SK-N-SH (cell line): ENCODE measurements at regions of chr17 and their contacts with region 1.

Region 1: GRCh38 chr17:7515911-7516610 is 31.9 kb downstream of the POLR2A start:
- DNase-seq: no peak
- H3K4me3 ChIP-seq: no peak overlapping the region
- H3K27ac ChIP-seq: no peak overlapping the region
- H3K4me1 ChIP-seq: no peaks in the 10 kb centered on the region
- H3K27me3 ChIP-seq: no peaks in the 10 kb centered on the region
- CTCF ChIP-seq: no peak
- EP300 ChIP-seq: no peak
- RAD21 ChIP-seq: no peak

Region 2: DNA sequence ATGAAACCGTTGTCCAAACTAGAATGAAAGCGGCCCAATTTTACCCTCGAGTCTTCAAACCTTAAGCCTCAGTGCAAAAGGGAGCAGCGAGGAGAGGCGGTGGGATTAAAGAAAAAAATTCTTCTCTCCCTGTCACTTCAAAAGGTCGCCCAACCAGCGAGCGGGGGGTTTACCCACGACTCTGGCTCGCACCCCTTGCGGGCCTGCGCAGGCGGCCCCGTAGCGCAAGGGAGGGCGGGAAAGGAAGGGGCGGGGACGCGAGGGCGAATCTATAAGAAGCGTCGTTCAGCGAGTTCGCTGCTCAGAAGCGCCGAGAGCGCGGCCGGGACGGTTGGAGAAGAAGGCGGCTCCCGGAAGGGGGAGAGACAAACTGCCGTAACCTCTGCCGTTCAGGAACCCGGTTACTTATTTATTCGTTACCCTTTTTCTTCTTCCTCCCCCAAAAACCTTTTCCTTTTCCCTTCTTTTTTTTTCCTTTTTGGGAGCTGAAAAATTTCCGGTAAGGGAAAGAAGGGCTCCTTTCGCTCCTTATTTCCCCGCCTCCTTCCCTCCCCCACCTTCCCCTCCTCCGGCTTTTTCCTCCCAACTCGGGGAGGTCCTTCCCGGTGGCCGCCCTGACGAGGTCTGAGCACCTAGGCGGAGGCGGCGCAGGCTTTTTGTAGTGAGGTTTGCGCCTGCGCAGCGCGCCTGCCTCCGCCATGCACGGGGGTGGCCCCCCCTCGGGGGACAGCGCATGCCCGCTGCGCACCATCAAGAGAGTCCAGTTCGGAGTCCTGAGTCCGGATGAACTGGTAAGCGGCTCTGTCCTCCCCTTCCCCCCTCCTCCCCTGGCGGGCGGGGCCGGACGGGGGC is 31.8 kb before region 1 on chr17 and contains the start of gene POLR2A:
- CTCF ChIA-PET with region 1: interaction called, 15 read pairs
- POLR2A ChIA-PET with region 1: no interaction called
- DNase-seq: peak; percentile 98
- H3K4me3 ChIP-seq: peak within 1 kb of the TSS; percentile 85 to 100
- H3K27ac ChIP-seq: peak within 1 kb of the TSS; percentile 99
- H3K4me1 ChIP-seq: peaks cover 31 to 34% of the 10 kb centered on the region in 2 experiments
- H3K27me3 ChIP-seq: no peaks in the 10 kb centered on the region
- CTCF ChIP-seq: no peak
- EP300 ChIP-seq: peak in 1 of 2 experiments; percentile 2; a peak in 2 of 4 replicates
- RAD21 ChIP-seq: 0 out of 2 replicates have a peak, but pooled peaks have one; percentile 13
- polyA plus RNA-seq, gene POLR2A: 19.0 and 37.3 TPM in 2 replicates

Region 3: DNA sequence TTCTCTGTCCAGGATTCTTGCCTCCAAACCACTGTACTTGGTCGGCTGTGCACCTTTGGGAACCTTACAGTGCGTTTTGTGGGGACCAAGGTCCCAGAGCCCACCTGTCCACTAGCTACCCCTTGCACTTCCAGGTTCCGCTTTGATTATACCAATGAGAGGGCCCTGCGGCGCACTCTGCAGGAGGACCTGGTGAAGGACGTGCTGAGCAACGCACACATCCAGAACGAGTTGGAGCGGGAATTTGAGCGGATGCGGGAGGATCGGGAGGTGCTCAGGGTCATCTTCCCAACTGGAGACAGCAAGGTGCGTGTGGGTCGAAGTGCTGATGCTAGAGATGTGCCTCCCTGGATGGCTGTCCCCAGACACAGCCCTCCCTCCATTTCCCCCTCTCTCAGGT is 13.1 kb before region 1 on chr17:
- CTCF ChIA-PET with region 1: interaction called, 15 read pairs
- POLR2A ChIA-PET with region 1: no interaction called
- DNase-seq: no peak
- H3K4me3 ChIP-seq: no peak overlapping the region
- H3K27ac ChIP-seq: no peak overlapping the region
- H3K4me1 ChIP-seq: no peaks in the 10 kb centered on the region
- H3K27me3 ChIP-seq: no peaks in the 10 kb centered on the region
- CTCF ChIP-seq: peak; percentile 39
- EP300 ChIP-seq: no peak
- RAD21 ChIP-seq: peak; percentile 47

Region 4: GRCh38 chr17:7548585-7549400 is 32.7 kb after region 1 on chr17 and contains the start of gene TNFSF12:
- CTCF ChIA-PET with region 1: interaction called, 236 read pairs
- POLR2A ChIA-PET with region 1: interaction called, 4 read pairs
- DNase-seq: peak; percentile 92
- H3K4me3 ChIP-seq: peak within 1 kb of the TSS; percentile 57 to 76
- H3K27ac ChIP-seq: peak within 1 kb of the TSS; percentile 26 to 45; a peak in 2 of 4 replicates
- H3K4me1 ChIP-seq: peaks cover 0 to 8% of the 10 kb centered on the region in 2 experiments; a peak in 1 of 4 replicates
- H3K27me3 ChIP-seq: no peaks in the 10 kb centered on the region; the same call in 1 of the 2 replicates
- CTCF ChIP-seq: peak; percentile 28; the same call in 1 of the 2 replicates
- EP300 ChIP-seq: no peak
- RAD21 ChIP-seq: no peak
- polyA plus RNA-seq, gene TNFSF12: 31.1 and 47.6 TPM in 2 replicates

Region 5: DNA sequence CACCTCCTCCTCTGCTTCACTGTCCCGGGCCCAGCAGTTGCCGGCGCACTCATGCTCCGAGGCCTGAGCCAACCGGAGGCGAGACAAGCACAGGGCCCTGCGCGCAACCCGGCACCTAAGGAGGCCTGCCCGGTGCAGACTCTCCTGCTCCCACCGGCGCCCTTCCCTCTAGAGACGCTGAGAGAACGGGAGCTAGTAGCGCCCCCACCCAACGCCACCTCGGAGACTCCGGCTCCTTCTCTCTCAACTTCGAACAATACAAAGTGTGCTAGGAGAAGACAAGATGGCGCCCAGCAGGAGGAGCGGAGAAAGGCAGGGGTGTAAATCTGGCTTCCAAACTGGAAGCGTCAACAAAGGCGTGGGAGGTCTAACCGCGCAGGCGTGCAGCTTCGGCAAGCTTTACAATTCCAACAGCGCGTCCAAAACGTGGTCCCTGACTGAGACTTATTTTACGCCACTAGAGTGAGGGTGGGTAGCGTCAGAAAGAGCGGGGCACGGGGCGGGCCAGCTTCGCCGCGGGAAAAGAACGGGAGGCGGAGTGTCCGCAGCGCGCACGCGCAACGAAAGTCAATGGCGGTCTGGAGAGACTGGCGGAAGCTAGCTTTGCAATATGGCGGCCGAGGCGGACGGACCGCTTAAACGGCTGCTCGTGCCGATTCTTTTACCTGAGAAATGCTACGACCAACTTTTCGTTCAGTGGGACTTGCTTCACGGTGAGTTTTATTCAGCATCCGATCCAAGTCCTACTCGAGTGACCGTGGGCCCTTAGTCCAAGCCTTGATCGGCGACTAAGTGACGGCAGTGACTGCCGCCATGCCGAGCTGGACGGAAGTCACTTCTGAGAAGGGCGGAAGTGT is 67.4 kb after region 1 on chr17 and contains the start of gene MPDU1:
- CTCF ChIA-PET with region 1: interaction called, 12 read pairs
- POLR2A ChIA-PET with region 1: interaction called, 3 read pairs
- DNase-seq: peak; percentile 93
- H3K4me3 ChIP-seq: peak within 1 kb of the TSS; percentile 65 to 73
- H3K27ac ChIP-seq: peak within 1 kb of the TSS; percentile 97 to 98
- H3K4me1 ChIP-seq: peaks cover 22 to 32% of the 10 kb centered on the region in 2 experiments; a peak in 3 of 4 replicates
- H3K27me3 ChIP-seq: no peaks in the 10 kb centered on the region
- CTCF ChIP-seq: no peak
- EP300 ChIP-seq: no peak
- RAD21 ChIP-seq: no peak
- polyA plus RNA-seq, gene MPDU1: 126 and 142 TPM in 2 replicates

Region 6: DNA sequence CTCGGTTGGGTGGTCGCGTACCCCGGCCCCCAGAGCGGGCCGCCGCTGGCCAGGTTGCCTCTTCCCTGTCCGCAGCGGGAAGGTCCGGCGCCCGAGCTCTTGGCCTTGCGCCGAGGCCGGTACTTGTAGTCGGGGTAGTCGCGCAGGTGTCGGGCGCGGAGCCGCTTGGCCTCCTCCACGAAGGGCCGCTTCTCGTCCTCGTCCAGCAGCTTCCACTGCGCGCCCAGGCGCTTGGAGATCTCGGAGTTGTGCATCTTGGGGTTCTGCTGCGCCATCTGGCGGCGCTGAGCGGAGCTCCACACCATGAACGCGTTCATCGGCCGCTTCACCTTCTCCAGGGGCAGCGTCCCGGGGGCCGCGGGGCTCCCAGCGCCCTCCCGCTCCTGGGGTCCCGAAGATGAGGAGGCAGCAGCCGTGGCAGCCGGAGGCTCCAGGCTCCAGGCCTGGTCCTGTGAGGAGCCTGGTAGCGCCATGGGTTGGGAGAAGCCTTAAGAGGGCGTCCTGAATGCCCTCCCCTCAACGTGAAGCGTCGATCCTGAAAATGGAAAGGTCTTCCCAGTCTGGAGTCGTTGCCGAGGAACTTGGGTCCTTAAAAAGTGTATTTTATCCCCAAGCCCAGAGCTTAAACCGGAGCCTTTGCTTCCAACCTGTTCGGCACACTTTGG is 73.3 kb after region 1 on chr17:
- CTCF ChIA-PET with region 1: interaction called, 17 read pairs
- POLR2A ChIA-PET with region 1: interaction called, 3 read pairs
- DNase-seq: peak; percentile 91
- H3K4me3 ChIP-seq: peak overlapping the region in 1 of 2 experiments; percentile 3; a peak in 1 of 4 replicates
- H3K27ac ChIP-seq: peak overlapping the region in 1 of 2 experiments; percentile 21; a peak in 2 of 4 replicates
- H3K4me1 ChIP-seq: peaks cover 17 to 32% of the 10 kb centered on the region in 2 experiments
- H3K27me3 ChIP-seq: no peaks in the 10 kb centered on the region
- CTCF ChIP-seq: peak; percentile 83
- EP300 ChIP-seq: no peak
- RAD21 ChIP-seq: peak; percentile 61

Region 7: GRCh38 chr17:7716901-7717755 is 201.1 kb after region 1 on chr17 and contains the start of gene DNAH2:
- CTCF ChIA-PET with region 1: no interaction called
- POLR2A ChIA-PET with region 1: no interaction called
- DNase-seq: peak; percentile 97
- H3K4me3 ChIP-seq: peak within 1 kb of the TSS; percentile 72 to 92
- H3K27ac ChIP-seq: peak within 1 kb of the TSS; percentile 61 to 90; a peak in 3 of 4 replicates
- H3K4me1 ChIP-seq: peaks cover 3 to 22% of the 10 kb centered on the region in 2 experiments; a peak in 1 of 4 replicates
- H3K27me3 ChIP-seq: no peaks in the 10 kb centered on the region
- CTCF ChIP-seq: peak; percentile 58
- EP300 ChIP-seq: peak; percentile 7 to 42; a peak in 1 of 4 replicates
- RAD21 ChIP-seq: peak; percentile 45
- polyA plus RNA-seq, gene DNAH2: 0.13 and 0.18 TPM in 2 replicates